ENCODE measurements at regions of chr4 and their contacts with region 1.

Region 1: GRCh38 chr4:103786014-103786413 is 66.2 kb upstream of the TACR3 start:
- DNase-seq: peak; percentile 27
- CTCF ChIP-seq: peak; percentile 43

Region 2: DNA sequence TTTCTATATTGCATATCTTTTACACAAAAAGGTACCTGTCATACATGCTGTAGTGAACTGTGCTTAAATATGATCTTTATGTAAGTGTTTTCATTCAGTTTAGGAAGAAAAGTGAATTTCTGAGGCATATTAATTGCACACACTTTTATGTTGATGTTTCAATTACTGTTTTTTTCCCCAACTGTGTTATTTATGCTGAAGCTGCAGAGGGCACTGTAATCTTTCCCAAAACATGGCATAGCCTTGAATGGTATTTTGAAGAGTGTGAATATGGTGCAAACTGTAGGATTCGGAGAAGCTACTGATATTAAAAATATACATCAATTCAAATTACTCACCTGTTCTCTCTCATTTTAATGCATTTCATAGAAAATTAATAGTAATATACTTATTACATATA is 581.9 kb before region 1 on chr4:
- in situ Hi-C with region 1: loop called (anchors 10 kb)
- DNase-seq: no peak
- CTCF ChIP-seq: no peak

Region 3: DNA sequence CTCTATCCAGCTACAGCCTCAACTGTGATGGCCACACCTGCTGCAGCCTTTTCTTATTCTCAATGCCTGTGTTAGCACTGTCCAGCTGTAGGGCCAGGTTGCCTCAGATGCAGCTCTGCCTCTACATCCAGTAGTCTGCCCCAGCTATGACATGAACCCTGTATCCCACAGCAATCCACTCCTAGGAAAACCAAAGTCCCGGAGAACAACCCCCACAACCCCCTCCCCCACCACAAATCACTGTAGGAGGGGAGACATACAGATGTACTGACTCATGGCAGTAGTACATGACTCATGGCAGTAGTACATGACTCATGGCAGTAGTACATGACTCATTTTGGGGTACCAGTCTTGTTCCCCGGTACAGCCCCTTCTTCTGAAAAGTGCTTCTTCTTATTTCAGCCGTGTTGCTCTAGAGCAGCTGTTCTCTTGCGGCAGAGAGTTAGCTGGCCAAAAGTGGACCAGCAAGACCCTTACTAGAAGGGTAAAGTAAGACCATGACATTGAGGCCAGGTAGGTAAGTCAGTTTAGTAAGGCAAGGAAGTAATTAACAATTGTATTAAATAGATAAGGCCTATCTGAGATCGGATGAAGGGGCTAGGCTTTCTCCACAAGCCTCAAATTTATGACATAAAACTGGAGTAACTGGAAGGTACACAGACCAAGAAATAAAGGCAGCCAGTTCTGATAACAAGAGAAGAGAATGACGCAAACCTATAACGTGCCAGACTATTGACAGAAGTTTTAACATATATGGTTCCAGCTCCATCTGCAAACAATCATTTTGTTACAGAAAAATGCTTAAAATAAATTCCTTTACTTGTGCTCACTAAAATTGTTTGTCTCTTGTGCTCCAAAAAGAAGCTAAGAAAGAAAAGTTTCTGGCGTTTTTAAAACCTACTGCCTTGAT is 287.6 kb before region 1 on chr4:
- in situ Hi-C with region 1: loop called (anchors 25 kb)
- DNase-seq: peak; percentile 34
- CTCF ChIP-seq: no peak